Activated CD4-positive, alpha-beta memory T cell treated with anti-CD3 and anti-CD28 coated beads for 36 hours (primary cell): ENCODE measurements at regions of chr14 and their contacts with region 1.

Region 1: DNA sequence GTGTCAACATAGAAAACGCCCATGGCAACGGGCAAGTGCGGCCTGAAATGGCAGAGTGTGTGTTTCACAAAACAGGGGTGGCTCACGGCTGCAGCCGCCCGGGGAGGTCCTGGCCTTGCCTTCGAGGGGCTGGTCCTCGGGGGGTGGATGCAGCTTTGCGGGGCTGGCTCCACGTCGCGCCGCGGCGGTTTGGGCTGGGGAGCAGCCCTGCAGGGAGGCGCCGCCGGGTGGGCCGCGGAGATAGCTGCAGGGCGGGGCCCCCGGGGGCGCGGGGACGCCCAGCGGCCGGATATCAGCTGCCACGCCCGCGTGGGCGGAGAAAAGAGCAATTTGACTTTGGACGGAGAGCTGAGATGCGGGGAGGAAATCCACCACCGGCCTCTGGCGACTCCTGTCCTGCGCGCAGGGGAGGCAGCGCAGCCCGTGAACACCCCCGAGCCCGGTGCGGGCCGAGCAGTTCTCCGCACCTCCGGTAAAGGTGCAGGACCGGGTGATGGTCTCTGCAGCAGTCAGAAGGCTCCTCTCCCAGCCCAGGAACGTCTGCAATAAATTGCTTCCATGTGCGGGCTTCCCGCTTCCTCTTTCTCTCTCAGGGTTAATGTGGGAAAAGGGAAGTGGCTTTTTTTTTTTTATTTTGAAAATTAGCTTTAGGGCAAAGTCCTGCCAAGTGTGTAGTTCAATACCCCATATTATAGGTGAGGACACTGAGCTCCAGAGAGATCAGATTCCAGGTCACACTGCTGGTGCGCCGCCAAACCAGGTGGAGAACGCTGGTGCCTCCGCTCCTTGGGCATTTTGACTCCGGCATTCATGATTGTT is 110.5 kb downstream of the ARF6 start:
- DNase-seq: peak; percentile 91
- H3K4me3 Mint-ChIP-seq: peak overlapping the region; percentile 71
- H3K27ac Mint-ChIP-seq: peak overlapping the region; percentile 95
- H3K4me1 Mint-ChIP-seq: peaks cover 49% of the 10 kb centered on the region
- H3K27me3 Mint-ChIP-seq: no peaks in the 10 kb centered on the region

Region 2: GRCh38 chr14:49852301-49853157 is 150.9 kb before region 1 on chr14 and contains the start of gene NEMF:
- CTCF ChIA-PET with region 1: interaction called, 5 read pairs
- POLR2A ChIA-PET with region 1: interaction called, 24 read pairs
- intact Hi-C with region 1: no loop called
- DNase-seq: peak; percentile 88
- H3K4me3 Mint-ChIP-seq: peak within 1 kb of the TSS; percentile 98
- H3K27ac Mint-ChIP-seq: peak within 1 kb of the TSS; percentile 95
- H3K4me1 Mint-ChIP-seq: peaks cover 39% of the 10 kb centered on the region
- H3K27me3 Mint-ChIP-seq: no peaks in the 10 kb centered on the region
- total RNA-seq, gene NEMF: 63.6 to 71.0 TPM

Region 3: DNA sequence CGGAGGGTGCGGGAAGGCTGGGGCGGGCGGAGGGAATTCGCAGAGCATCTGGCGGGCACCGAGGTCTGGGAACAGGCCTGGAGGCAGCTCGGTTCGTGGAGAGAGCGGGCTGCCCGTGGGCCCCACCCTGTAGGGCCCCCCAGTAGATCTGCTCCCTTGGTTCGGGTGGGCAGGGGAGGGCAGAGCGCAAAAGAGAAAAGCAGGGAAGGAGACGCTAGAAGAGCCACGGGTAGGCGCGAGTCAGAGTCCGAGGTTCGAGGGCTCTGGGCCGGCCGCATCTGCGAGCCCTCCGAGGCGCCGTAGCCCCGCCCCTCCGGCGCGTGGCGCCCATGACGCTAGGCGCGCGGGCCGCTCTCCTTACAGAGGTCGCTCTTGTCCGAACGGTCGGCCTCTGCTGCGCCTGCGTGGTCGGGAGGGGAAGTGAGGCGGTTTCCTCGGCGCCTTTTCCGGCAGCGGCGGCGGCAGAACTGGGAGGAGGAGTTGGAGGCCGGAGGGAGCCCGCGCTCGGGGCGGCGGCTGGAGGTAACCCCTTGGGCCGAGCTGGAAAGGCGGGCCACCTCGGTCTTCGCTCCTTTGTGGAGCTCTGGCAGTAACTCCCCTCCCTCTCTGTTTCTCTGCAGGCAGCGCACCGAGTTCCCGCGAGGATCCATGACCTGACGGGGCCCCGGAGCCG is 110.7 kb before region 1 on chr14 and contains the start of gene ARF6:
- CTCF ChIA-PET with region 1: interaction called, 4 read pairs
- POLR2A ChIA-PET with region 1: interaction called, 93 read pairs
- intact Hi-C with region 1: loop called (anchors 1 kb)
- DNase-seq: peak; percentile 98
- H3K4me3 Mint-ChIP-seq: peak within 1 kb of the TSS; percentile 90
- H3K27ac Mint-ChIP-seq: peak within 1 kb of the TSS; percentile 93
- H3K4me1 Mint-ChIP-seq: peaks cover 18% of the 10 kb centered on the region
- H3K27me3 Mint-ChIP-seq: no peaks in the 10 kb centered on the region
- total RNA-seq, gene ARF6: 198 to 202 TPM

Region 4: DNA sequence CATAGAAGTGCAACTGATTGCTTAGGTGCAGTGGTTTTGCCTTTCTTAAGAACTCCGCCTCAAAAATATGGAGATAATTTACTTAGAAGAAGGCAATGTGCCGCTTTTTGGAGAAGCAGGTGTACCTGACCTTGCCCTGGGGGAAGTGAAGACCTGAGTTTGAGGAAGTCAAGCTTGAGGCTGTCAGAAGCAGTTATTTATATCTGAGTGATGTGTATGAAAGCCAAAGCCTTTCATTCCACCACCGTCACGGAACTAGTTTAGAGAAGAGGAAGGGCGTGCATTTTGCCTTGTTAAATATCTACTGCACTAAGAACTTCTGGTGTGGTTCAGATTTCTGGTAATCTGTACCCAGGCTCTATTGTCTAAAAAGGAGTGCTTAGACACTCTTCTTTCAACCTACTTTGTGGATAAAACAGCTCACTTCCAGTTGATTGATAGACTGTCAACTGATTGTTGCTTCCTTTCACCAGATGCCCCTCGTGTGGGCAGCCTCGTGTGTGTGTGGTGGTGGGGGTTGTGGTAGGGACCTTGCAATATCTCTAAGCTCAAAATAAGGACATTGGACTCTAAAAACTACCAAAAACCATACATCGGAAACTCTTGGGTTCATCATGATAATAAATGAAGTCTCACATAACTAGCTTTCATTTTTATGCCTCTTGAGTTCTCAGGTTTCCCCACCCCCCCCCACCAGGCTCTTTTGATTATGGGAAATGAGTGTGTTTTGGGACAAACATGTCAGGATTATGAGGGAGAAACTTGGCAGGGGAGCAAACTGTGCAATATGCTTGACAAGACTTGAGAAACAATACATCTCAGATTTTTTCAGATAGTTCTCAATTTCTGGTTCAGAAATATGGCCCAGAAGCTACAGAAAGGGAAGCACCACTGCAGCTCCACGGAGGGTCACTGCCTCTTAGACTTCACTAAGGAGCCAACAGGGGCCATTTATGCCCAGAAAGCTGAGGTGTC is 32.0 kb before region 1 on chr14:
- CTCF ChIA-PET with region 1: interaction called, 39 read pairs
- POLR2A ChIA-PET with region 1: interaction called, 162 read pairs
- intact Hi-C with region 1: loop called (anchors 1 kb)
- DNase-seq: peak; percentile 78
- H3K4me3 Mint-ChIP-seq: peak overlapping the region; percentile 62
- H3K27ac Mint-ChIP-seq: peak overlapping the region; percentile 95
- H3K4me1 Mint-ChIP-seq: peaks cover 61% of the 10 kb centered on the region
- H3K27me3 Mint-ChIP-seq: no peaks in the 10 kb centered on the region

Region 5: DNA sequence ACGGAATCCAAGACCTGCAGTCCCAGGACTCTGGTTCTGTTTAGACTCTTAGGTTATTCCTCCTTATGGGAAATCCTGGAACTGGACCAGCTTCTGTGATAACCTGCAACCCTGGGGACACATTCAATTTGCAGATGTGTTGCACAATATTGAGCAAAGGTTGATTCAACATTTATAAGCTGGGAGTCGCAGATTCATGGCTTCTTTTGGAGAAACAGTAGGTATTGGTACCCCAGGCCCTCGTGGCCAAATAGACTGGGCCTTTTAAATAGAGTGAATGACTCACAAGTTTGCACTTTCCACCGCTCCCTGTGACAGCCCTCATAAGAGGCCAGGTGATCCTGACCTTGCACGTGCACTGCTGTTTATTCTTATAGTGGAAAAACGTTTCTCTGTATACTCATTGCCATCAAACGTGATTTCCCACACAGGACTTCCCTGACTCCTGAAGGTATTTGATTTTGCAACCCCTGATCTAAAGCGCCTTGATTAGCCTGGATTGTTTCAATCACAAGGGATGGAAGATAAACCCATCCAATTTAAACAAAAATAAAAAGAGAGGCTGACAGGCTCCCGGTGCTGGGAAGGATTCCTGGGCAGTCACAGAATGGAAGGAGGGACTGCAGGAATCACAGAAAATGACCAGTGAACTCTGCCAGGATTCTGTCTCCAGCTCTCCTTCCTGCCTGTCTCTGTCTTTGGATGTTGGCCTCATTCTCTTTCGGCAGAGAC is 14.9 kb after region 1 on chr14:
- CTCF ChIA-PET with region 1: interaction called, 5 read pairs
- POLR2A ChIA-PET with region 1: interaction called, 17 read pairs
- intact Hi-C with region 1: loop called (anchors 1 kb)
- DNase-seq: no peak
- H3K4me3 Mint-ChIP-seq: no peak overlapping the region
- H3K27ac Mint-ChIP-seq: no peak overlapping the region
- H3K4me1 Mint-ChIP-seq: peaks cover 44% of the 10 kb centered on the region
- H3K27me3 Mint-ChIP-seq: no peaks in the 10 kb centered on the region

Region 6: DNA sequence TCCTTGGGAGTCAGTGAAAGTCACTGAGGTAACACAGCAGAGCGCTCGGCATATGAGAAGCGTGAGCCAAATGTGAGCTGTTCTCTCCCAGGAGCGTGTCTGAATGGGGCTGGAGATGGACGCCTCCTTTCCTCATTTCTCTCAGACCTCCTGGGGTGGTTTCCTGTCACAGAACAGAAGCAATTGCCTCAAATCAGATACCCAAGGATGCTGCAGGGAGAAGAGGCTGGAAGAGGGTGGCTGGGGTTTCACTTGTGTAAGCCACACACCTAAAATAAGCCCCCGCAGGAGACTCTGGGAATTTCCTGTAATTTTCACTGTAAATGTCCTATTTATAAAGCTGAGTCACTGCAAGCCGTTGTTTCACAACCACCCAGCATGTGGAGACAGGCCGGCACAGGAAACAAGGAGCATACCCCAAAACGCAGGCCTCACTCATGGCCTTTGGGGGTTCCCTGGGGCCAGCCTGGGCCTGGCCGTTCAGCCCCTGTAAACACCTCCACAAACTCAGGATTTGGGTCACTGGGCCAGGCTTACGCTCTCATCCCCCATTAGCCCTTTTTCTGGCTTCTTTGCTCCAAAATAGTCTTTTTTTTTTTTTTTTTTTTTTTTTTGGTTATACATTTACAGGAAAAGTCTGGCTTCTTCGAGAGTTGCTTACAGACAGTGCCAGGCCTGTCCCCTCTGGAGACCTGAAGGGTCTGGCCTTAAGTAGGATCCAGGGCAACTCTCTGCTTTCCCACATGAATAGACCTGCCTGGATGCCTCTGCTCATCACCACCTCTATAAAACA is 57.6 kb after region 1 on chr14:
- CTCF ChIA-PET with region 1: interaction called, 21 read pairs
- POLR2A ChIA-PET with region 1: interaction called, 117 read pairs
- intact Hi-C with region 1: loop called (anchors 1 kb)
- DNase-seq: peak; percentile 71
- H3K4me3 Mint-ChIP-seq: peak overlapping the region; percentile 96
- H3K27ac Mint-ChIP-seq: peak overlapping the region; percentile 99
- H3K4me1 Mint-ChIP-seq: peaks cover 73% of the 10 kb centered on the region
- H3K27me3 Mint-ChIP-seq: no peaks in the 10 kb centered on the region

Region 7: GRCh38 chr14:50231475-50232275 is 228.3 kb after region 1 on chr14 and contains the start of gene SOS2:
- CTCF ChIA-PET with region 1: no interaction called
- POLR2A ChIA-PET with region 1: interaction called, 3 read pairs
- intact Hi-C with region 1: loop called (anchors 10 kb)
- DNase-seq: peak; percentile 86
- H3K4me3 Mint-ChIP-seq: peak within 1 kb of the TSS; percentile 78
- H3K27ac Mint-ChIP-seq: peak within 1 kb of the TSS; percentile 85
- H3K4me1 Mint-ChIP-seq: peaks cover 40% of the 10 kb centered on the region
- H3K27me3 Mint-ChIP-seq: no peaks in the 10 kb centered on the region
- total RNA-seq, gene SOS2: 19.6 to 20.9 TPM